Activated T-helper 1 cell treated with anti-CD3 and anti-CD28 coated beads, Interleukin-12 subunit alpha, Interleukin-12 subunit beta, Interleukin-2, Interleukin-4 antibody, amounts not matched to agents 30 ng/mL and 10 ng/mL and 1 ng/mL, durations not matched to agents 14 hours and 24 hours and 36 hours (primary cell): ENCODE measurements at regions of chr1 and their contacts with region 1.

Region 1: GRCh38 chr1:151459331-151460046 is at the start of gene POGZ:
- DNase-seq: peak; percentile 88
- H3K4me3 Mint-ChIP-seq: peak within 1 kb of the TSS; percentile 90
- H3K27ac Mint-ChIP-seq: peak within 1 kb of the TSS; percentile 97
- H3K4me1 Mint-ChIP-seq: peaks cover 21% of the 10 kb centered on the region
- H3K27me3 Mint-ChIP-seq: peaks cover 13% of the 10 kb centered on the region
- total RNA-seq, gene POGZ: 89.1 and 91.1 TPM in 2 replicates

Region 2: DNA sequence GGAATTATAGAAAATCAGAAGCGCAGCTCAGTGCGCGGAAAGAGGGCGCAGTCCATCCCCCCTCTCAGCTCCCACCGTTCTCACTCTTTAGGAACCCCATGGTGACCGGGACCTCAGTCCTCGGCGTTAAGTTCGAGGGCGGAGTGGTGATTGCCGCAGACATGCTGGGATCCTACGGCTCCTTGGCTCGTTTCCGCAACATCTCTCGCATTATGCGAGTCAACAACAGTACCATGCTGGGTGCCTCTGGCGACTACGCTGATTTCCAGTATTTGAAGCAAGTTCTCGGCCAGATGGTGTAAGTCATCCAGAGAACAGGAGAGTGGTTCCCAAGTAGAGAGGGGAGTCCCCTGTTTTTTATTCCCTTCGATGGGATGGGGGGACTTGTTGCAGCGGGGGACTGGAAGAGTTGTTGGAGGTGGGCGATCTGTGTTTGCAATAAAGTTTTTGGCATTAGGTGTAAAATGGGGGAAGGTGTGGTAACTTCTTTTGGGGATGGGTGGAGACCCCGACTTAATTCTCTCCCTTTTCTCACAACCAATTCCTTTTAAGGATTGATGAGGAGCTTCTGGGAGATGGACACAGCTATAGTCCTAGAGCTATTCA is 59.5 kb before region 1 on chr1:
- intact Hi-C with region 1: loop called (anchors 1 kb)
- DNase-seq: no peak
- H3K4me3 Mint-ChIP-seq: peak overlapping the region; percentile 92
- H3K27ac Mint-ChIP-seq: peak overlapping the region; percentile 99
- H3K4me1 Mint-ChIP-seq: peaks cover 27% of the 10 kb centered on the region
- H3K27me3 Mint-ChIP-seq: peaks cover 3% of the 10 kb centered on the region

Region 3: DNA sequence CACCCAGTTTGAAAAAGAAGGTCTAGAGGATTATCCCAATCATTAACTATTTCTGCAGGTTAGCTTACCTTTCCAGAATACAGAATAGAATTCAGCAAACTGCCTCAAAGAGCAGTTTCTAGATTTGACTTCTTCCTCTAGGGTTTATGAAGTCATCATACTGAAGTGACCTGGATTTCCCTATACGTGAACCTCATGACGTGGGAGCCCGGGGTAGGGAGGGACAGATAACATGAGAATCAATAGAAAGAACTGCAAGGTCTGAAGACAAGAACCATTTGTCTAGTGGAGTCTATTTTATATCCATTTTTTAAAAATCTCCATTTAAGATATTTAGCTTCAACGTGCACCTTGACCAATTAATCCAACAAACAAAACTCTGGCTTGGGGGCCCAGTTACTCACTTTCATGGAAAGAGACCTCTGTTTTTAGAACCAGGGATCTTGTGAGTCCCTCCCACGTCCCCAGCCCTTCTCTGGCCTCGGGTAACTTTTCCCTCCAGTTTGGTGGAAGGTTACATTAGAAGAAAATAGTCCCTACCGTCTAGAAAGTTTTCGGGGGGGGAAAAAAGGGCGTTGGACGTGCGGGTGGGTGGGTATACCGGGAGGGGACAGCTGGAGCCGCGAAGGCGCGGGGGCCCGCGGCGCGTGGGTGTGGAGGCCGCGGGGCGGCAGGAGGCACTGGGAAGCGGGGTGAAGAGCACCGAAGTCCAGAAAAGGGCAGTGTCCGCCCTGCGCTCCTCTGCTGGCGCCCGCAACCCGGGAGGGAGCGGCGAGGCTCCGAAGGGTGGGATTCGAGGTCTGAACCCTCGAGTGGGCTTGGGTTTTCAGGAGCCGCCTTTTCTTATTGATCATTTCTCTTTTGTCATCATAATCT is 13.6 kb after region 1 on chr1:
- intact Hi-C with region 1: loop called (anchors 1 kb)
- DNase-seq: no peak
- H3K4me3 Mint-ChIP-seq: peak overlapping the region; percentile 67
- H3K27ac Mint-ChIP-seq: peak overlapping the region; percentile 61
- H3K4me1 Mint-ChIP-seq: peaks cover 14% of the 10 kb centered on the region
- H3K27me3 Mint-ChIP-seq: peaks cover 2% of the 10 kb centered on the region

Region 4: DNA sequence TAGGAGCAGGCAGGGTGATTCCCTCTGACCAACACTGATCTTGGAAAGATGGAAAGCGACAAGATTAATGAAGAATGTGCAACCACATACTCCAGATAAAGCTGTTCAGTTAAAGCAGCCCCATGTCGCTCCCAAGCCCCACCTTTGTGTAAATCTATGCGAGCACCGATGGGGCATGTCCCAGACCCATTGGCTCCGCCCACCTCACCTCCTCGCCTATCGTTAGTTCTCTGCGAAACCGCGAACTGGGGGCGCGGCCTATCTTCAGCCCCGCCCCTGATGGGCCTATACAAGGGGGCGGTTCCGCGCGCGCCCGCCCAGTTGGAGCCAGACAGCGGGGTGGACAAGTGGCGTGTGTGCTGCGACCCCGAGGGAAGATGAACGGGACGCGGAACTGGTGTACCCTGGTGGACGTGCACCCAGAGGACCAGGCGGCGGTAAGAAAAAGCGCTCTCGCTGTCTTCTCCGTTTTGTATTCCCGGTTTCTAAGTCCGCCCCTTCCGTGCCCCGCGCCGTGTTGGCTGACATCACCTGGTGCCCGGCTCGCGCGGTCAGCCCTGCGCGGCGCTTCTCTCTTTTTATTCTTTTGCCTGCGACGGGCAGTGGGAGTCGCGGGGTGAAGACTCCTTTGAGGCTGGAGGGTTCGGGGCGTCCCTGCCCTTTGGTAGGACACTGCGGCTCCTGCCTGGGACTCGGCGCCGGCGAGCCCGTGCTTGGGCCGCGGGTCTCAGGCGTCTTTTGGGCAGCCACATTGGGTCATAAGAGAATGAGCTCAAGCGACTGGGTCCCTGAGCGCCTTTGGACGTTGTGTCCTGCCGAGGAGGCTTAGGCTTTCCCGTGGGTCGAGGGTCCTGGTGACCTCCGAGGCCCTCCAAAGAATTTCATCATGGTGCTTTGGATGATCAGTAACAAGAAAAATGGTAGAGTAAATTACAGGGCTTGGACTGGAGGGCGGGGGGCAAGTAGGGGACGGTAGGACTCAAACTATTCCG is 80.8 kb after region 1 on chr1 and contains the start of gene TUFT1:
- intact Hi-C with region 1: loop called (anchors 1 kb)
- DNase-seq: peak; percentile 91
- H3K4me3 Mint-ChIP-seq: peak within 1 kb of the TSS; percentile 91
- H3K27ac Mint-ChIP-seq: peak within 1 kb of the TSS; percentile 62
- H3K4me1 Mint-ChIP-seq: peaks cover 16% of the 10 kb centered on the region
- H3K27me3 Mint-ChIP-seq: peaks cover 10% of the 10 kb centered on the region
- total RNA-seq, gene TUFT1: 1.9 and 2.3 TPM in 2 replicates

Region 5: DNA sequence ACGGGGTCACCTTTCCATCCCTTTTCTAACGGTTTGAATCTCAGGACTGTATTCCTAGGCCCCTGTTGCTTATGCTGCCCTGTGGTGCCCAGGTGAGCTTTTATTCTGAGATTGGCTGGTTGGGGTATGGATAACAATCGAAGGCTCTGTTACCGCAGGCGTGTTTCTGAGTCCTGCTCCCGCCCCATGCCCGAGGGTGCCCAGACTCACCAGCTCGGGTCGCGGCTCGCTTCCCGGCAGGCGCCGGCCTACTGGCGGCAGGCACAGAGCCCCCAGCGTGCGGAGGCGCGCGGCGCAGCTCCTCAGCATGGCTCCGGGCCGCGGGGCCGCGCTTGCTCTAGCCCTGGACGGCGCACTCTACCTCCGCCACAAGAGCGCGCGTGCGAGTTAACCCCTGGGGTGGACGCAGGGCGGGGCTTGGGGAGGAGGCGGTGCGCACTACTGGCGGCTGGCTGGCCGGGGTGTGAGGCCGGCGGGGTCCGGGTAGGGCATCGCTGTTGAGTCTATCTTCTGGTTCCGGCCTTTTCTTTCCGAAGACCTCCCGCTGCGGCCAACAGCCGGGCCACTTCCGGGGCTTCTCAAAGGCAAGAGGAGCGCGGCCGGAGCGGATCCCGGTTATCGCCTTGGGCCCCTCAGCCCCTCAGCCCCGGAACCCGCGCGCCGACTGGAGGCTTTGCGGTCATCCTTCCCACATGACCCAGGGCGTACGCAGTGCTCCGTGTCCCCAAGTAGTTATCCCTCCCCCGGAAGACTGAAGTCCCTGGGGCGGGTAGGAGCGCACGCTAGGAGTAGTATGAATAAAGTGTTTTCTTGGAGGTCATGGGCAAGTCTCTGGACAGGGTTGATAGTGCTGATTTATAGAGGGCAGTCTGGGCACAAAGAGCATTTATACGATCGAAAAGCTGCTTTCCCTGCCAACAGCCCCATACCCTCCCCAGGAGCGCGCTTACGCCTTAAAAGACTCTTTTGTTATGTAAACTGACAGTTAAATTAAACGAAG is 450.0 kb after region 1 on chr1 and contains the start of gene THEM4:
- intact Hi-C with region 1: loop called (anchors 1 kb)
- DNase-seq: peak; percentile 87
- H3K4me3 Mint-ChIP-seq: peak within 1 kb of the TSS; percentile 80
- H3K27ac Mint-ChIP-seq: peak within 1 kb of the TSS; percentile 85
- H3K4me1 Mint-ChIP-seq: peaks cover 37% of the 10 kb centered on the region
- H3K27me3 Mint-ChIP-seq: peaks cover 5% of the 10 kb centered on the region
- total RNA-seq, gene THEM4: 24.7 and 27.5 TPM in 2 replicates